MCF 10A (cell line): ENCODE measurements at regions of chr10 and their contacts with region 1.

Region 1: DNA sequence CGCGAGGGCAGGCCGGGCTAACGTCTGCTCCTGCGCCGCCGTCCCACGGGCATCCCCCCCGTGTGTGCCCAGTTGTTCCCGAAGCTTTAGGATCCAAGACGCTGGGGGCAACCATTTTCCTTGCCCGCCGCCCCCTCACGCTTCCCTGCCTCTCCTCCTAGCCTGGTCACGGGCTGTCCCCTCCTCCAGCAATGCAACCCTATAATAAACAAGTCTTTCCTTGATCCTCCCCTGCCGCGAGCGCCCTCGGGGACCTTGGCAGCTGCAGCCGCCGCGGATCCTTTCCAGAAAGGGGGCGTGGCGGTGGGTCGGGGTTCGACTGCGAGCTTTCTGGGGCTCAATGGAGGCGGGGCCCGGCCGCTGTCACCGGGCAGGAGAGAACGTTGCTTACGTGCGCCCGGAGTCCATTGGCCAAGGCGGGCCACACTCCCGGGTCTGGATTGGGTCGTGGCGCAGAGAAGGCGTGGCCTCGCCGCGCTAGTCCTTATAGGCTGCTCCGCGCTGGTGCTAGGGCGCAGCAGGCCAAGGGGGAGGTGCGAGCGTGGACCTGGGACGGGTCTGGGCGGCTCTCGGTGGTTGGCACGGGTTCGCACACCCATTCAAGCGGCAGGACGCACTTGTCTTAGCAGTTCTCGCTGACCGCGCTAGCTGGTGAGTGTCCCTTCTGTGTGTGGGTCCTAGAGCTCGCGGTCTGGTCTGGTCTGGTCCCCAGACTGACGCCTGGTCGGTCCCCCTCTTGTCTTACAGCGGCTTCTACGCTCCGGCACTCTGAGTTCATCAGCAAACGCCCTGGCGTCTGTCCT is at the start of gene DDIT4:
- DNase-seq: peak; percentile 99
- H3K4me3 Mint-ChIP-seq: peak within 1 kb of the TSS; percentile 81
- H3K27ac Mint-ChIP-seq: peak within 1 kb of the TSS; percentile 92
- H3K4me1 Mint-ChIP-seq: peaks cover 38% of the 10 kb centered on the region
- H3K27me3 Mint-ChIP-seq: no peaks in the 10 kb centered on the region
- CTCF ChIP-seq: no peak
- total RNA-seq, gene DDIT4: 698 and 872 TPM in 2 replicates

Region 2: DNA sequence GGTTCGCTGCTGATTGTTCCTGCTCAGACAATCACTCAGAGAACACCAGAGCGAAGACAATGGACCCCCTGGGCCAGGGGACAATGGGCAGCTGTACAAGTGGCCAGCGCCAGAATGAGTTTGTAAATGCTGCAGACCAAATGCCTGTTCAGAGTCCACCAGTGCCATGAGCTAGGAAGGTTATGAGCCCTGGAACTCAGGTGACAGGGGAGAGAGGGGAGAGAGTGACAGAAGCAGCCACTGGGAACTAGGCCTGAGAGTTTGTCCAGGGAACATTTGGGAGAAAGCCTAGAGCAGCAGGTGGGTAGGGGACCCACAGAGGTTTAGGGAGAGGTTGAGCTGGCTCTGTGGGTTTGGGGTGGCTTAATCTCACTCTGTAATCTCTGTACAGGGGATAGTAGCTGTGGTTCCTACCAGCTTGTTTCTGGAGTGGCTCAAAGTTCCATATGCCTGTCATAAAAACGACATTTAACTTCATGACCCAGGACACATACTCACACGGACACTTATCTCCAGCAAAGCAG is 614.4 kb before region 1 on chr10:
- CTCF ChIA-PET with region 1: no interaction called
- POLR2A ChIA-PET with region 1: no interaction called
- intact Hi-C with region 1: no loop called
- DNase-seq: no peak
- H3K4me3 Mint-ChIP-seq: no peak overlapping the region
- H3K27ac Mint-ChIP-seq: no peak overlapping the region
- H3K4me1 Mint-ChIP-seq: no peaks in the 10 kb centered on the region
- H3K27me3 Mint-ChIP-seq: peaks cover 23% of the 10 kb centered on the region
- CTCF ChIP-seq: no peak

Region 3: DNA sequence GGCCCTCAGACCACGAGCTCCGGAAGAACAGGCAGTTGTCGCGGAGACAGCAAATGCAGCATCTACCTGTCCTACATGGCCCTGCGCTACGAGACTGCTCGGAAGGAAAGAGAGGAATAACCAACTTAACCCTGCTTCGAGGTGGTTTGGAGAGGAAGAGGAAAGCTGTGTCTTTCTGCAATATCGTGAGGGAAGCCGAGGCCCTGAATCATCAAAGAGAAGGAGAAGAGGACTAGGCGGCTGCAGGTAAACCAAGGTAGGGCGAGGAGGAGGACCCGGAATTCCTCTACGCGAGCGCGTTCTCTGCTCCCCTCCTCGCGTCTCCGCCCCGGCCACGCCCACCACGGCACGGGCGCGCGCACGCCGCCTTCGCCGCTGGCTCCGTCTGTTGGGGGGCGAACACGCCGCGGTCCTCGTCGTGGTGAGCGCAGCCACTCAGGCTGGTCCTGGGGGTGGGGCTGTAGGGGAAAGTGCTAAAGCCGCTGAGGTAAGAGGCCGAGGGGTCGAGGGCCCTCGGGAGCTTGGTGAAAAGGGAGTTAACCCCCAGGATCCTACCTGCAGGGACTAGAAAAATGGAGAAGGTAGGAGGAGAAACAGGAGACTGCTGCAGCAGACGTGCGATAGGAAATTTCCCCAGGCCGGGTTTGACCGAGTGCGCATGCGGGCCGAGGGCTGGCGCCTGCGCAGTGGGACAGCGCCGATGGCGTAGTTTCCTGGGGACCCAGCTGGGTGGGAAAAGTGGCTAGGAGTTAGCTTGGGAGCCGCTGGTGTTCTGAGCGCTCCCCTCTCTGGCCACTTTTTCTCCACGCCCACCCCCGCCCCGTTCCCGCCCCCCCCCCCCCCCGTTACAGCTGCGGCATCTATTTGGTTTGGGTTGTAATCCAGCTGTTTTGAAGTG is 57.7 kb before region 1 on chr10 and contains the starts of genes ANAPC16 and ASCC1:
- CTCF ChIA-PET with region 1: interaction called, 7 read pairs
- POLR2A ChIA-PET with region 1: interaction called, 45 read pairs
- intact Hi-C with region 1: loop called (anchors 2 kb)
- DNase-seq: peak; percentile 89
- H3K4me3 Mint-ChIP-seq: peak within 1 kb of the TSS; percentile 100
- H3K27ac Mint-ChIP-seq: peak within 1 kb of the TSS; percentile 92
- H3K4me1 Mint-ChIP-seq: peaks cover 6% of the 10 kb centered on the region
- H3K27me3 Mint-ChIP-seq: no peaks in the 10 kb centered on the region
- CTCF ChIP-seq: no peak
- total RNA-seq, gene ANAPC16: 97.0 and 110 TPM in 2 replicates
- total RNA-seq, gene ASCC1: 26.3 and 31.6 TPM in 2 replicates

Region 4: GRCh38 chr10:72238392-72239175 is 35.0 kb before region 1 on chr10:
- CTCF ChIA-PET with region 1: interaction called, 9 read pairs
- POLR2A ChIA-PET with region 1: interaction called, 902 read pairs
- intact Hi-C with region 1: no loop called
- DNase-seq: no peak
- H3K4me3 Mint-ChIP-seq: no peak overlapping the region
- H3K27ac Mint-ChIP-seq: no peak overlapping the region
- H3K4me1 Mint-ChIP-seq: peaks cover 27% of the 10 kb centered on the region
- H3K27me3 Mint-ChIP-seq: no peaks in the 10 kb centered on the region
- CTCF ChIP-seq: no peak

Region 5: GRCh38 chr10:72260588-72261322 is 12.9 kb before region 1 on chr10:
- CTCF ChIA-PET with region 1: interaction called, 23 read pairs
- POLR2A ChIA-PET with region 1: interaction called, 902 read pairs
- intact Hi-C with region 1: no loop called
- DNase-seq: peak; percentile 99
- H3K4me3 Mint-ChIP-seq: peak overlapping the region; percentile 53
- H3K27ac Mint-ChIP-seq: peak overlapping the region; percentile 87
- H3K4me1 Mint-ChIP-seq: peaks cover 46% of the 10 kb centered on the region
- H3K27me3 Mint-ChIP-seq: no peaks in the 10 kb centered on the region
- CTCF ChIP-seq: no peak

Region 6: GRCh38 chr10:72319416-72320254 is 46.0 kb after region 1 on chr10:
- CTCF ChIA-PET with region 1: interaction called, 46 read pairs
- POLR2A ChIA-PET with region 1: interaction called, 383 read pairs
- intact Hi-C with region 1: loop called (anchors 1 kb)
- DNase-seq: peak; percentile 96
- H3K4me3 Mint-ChIP-seq: peak overlapping the region; percentile 56
- H3K27ac Mint-ChIP-seq: peak overlapping the region; percentile 95
- H3K4me1 Mint-ChIP-seq: peaks cover 47% of the 10 kb centered on the region
- H3K27me3 Mint-ChIP-seq: no peaks in the 10 kb centered on the region
- CTCF ChIP-seq: no peak